ENCODE measurements at regions of chr20 and their contacts with region 1.

Region 1: GRCh38 chr20:57753332-57754164 is 43.7 kb upstream of the PMEPA1 start:
- DNase-seq: peak in 1 of 2 experiments; percentile 33
- H3K4me3 ChIP-seq: no peak overlapping the region
- H3K4me3 Mint-ChIP-seq: no peak overlapping the region
- H3K27ac Mint-ChIP-seq: no peak overlapping the region
- H3K4me1 ChIP-seq: no peaks in the 10 kb centered on the region; the same call in 1 of the 2 replicates
- H3K4me1 Mint-ChIP-seq: no peaks in the 10 kb centered on the region
- H3K27me3 ChIP-seq: peaks cover 2% of the 10 kb centered on the region
- H3K27me3 Mint-ChIP-seq: peaks cover 28% of the 10 kb centered on the region
- CTCF ChIP-seq: no peak

Region 2: DNA sequence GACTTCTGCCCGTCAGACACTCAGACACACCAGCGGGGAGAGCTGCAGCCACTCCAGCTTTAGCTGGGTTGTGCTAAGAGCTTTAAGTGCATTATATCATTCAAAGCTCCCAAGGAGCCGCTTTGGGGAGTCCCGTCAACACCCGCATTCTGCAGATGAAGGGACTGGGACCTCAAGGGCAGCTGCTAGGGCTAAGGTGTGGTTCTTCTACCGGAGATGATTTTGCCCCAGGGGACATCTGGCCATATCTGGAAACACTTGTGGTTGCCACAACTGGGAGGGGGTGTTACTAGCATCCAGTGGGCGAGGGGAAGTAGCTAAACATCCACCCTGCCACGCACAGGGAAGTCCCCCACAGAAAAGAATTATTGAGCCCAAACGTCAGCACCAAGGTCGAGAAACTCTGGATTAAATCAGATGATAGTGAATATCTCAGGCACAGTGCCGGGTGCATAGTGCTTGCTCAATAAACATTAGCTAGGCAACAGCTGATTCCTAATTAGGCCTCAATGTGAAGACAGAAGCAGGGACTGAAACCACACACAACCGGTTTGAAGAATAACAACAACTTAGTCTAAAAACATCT is 73.3 kb before region 1 on chr20:
- CTCF ChIA-PET with region 1: no interaction called
- POLR2A ChIA-PET with region 1: no interaction called
- intact Hi-C with region 1: no loop called
- DNase-seq: no peak
- H3K4me3 ChIP-seq: no peak overlapping the region
- H3K4me3 Mint-ChIP-seq: no peak overlapping the region
- H3K27ac Mint-ChIP-seq: no peak overlapping the region
- H3K4me1 ChIP-seq: no peaks in the 10 kb centered on the region
- H3K4me1 Mint-ChIP-seq: peaks cover 1% of the 10 kb centered on the region
- H3K27me3 ChIP-seq: no peaks in the 10 kb centered on the region
- H3K27me3 Mint-ChIP-seq: peaks cover 4% of the 10 kb centered on the region
- CTCF ChIP-seq: no peak

Region 3: GRCh38 chr20:57770847-57771628 is 17.5 kb after region 1 on chr20:
- CTCF ChIA-PET with region 1: interaction called, 11 read pairs
- POLR2A ChIA-PET with region 1: no interaction called
- intact Hi-C with region 1: no loop called
- DNase-seq: peak; percentile 37 to 53
- H3K4me3 ChIP-seq: no peak overlapping the region
- H3K4me3 Mint-ChIP-seq: no peak overlapping the region
- H3K27ac Mint-ChIP-seq: no peak overlapping the region
- H3K4me1 ChIP-seq: no peaks in the 10 kb centered on the region; the same call in 1 of the 2 replicates
- H3K4me1 Mint-ChIP-seq: peaks cover 8% of the 10 kb centered on the region
- H3K27me3 ChIP-seq: no peaks in the 10 kb centered on the region
- H3K27me3 Mint-ChIP-seq: peaks cover 9% of the 10 kb centered on the region
- CTCF ChIP-seq: no peak

Region 4: DNA sequence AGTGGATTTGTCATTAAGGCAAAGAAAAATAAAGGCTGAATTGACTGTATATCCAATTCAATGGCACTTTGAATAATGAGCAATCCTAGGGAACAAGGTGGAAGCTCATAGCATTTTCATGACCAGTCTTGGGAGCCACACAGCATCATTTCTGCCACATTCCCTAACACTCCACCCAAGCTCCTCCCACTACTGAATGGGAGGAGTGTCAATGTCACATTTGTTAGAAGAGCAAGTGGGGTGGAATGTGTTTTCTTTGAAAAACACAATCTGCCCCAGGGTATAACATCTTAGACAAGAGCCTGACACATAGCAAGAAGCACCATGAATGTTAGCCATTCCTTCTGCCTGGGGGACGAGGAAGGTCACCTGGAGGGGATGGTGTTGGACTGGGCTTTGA is 214.5 kb after region 1 on chr20:
- CTCF ChIA-PET with region 1: no interaction called
- POLR2A ChIA-PET with region 1: no interaction called
- intact Hi-C with region 1: no loop called
- DNase-seq: no peak
- H3K4me3 ChIP-seq: no peak overlapping the region
- H3K4me3 Mint-ChIP-seq: no peak overlapping the region
- H3K27ac Mint-ChIP-seq: no peak overlapping the region
- H3K4me1 ChIP-seq: no peaks in the 10 kb centered on the region
- H3K4me1 Mint-ChIP-seq: no peaks in the 10 kb centered on the region
- H3K27me3 ChIP-seq: no peaks in the 10 kb centered on the region; the same call in 1 of the 2 replicates
- H3K27me3 Mint-ChIP-seq: peaks cover 10% of the 10 kb centered on the region
- CTCF ChIP-seq: no peak